WTC11 (cell line): ENCODE measurements at regions of chr14 and their contacts with region 1.

Region 1: GRCh38 chr14:74257078-74257989 is 18.1 kb downstream of the VSX2 start:
- DNase-seq: peak; percentile 68
- ATAC-seq: peak; percentile 69
- H3K4me3 Mint-ChIP-seq: peak overlapping the region; percentile 80
- H3K27ac Mint-ChIP-seq: no peak overlapping the region
- H3K4me1 Mint-ChIP-seq: no peaks in the 10 kb centered on the region
- H3K27me3 Mint-ChIP-seq: peaks cover 55% of the 10 kb centered on the region
- CTCF ChIP-seq: peak; percentile 97

Region 2: DNA sequence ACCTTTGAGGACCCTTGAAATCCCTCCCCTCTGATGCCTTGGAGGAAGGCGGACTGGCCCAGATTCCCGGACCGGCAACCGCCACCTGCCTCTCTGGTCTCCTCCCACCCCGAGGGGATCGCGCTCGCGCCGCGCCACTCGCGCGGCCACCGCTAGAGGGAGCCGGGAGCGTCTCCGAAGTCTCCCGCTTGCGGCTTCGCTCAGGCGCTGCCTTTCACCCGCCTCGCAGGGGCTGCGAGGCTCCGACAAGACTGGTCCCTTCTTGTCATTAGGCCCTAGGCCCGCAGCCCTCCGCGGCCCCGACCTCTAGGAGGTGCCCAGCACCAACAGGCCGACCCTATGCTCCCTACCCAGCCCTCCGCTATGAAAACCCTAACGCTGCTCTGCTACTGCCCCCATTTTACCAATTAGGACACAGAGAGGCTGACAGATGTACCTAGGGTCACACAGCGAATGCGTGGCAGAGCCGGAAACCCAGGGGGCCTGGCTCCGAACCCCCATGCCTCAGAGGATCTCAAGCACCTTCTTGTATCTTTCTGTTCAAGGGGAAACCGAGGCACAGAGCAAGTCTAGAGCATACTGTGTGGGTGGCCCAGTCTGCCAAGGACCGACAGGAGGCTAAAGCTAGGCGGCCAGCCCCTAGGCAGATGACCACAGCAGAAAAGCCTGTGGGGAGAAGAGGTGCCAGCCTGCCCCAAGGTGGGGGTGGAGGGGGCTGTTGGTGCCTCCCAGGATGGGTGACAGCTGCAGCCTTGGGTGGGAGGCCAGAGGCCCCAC is 39.5 kb before region 1 on chr14:
- CTCF ChIA-PET with region 1: interaction called, 35 read pairs
- POLR2A ChIA-PET with region 1: no interaction called
- DNase-seq: peak; percentile 94
- ATAC-seq: peak; percentile 92
- H3K4me3 Mint-ChIP-seq: peak overlapping the region; percentile 20; the same call in 1 of the 2 replicates
- H3K27ac Mint-ChIP-seq: no peak overlapping the region
- H3K4me1 Mint-ChIP-seq: no peaks in the 10 kb centered on the region; the same call in 1 of the 2 replicates
- H3K27me3 Mint-ChIP-seq: peaks cover 26% of the 10 kb centered on the region
- CTCF ChIP-seq: peak; percentile 94

Region 3: DNA sequence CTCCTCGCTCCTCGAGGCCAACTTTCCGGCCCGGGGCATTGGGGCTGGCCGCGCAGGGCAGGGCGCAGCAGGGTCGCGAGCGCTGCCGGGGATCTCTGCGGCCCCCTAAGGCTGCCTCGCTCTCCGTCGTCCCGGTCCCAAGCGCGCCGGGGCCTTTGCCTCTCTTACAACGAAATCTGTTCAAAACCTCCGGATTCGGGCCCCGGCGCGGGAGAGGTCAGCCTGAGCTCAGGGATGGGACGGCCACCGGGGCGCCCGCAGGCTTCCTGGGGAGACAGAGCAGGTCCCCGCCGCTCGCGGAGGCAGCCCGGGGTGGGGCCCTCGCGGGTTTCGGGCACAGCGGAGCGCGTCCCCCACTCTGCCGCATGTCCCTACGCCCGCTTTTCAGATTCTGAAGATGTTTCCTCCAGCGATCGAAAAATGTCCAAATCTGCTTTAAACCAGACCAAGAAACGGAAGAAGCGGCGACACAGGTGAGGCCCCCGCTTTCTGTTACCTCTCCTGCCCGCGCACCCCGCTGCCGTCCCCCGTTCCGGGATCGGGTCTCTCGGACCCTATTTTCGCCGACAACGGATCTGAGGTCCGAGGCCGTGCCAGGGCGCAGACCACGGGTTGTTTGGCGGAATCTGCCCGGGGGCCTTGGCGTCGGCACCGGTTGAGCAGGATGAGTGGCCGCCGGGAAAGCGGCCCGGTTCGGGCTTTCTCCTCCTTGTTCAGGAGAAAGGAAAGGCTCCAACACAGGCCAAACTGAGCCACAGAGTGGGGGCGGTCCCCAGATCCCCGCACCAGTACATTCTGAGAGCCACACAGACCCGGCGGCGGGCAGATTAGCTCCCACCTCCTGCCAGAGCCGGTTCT is 16.3 kb before region 1 on chr14:
- CTCF ChIA-PET with region 1: interaction called, 89 read pairs
- POLR2A ChIA-PET with region 1: no interaction called
- DNase-seq: peak; percentile 45
- ATAC-seq: peak; percentile 6
- H3K4me3 Mint-ChIP-seq: peak overlapping the region; percentile 66
- H3K27ac Mint-ChIP-seq: no peak overlapping the region
- H3K4me1 Mint-ChIP-seq: peaks cover 36% of the 10 kb centered on the region
- H3K27me3 Mint-ChIP-seq: peaks cover 96% of the 10 kb centered on the region
- CTCF ChIP-seq: no peak

Region 4: DNA sequence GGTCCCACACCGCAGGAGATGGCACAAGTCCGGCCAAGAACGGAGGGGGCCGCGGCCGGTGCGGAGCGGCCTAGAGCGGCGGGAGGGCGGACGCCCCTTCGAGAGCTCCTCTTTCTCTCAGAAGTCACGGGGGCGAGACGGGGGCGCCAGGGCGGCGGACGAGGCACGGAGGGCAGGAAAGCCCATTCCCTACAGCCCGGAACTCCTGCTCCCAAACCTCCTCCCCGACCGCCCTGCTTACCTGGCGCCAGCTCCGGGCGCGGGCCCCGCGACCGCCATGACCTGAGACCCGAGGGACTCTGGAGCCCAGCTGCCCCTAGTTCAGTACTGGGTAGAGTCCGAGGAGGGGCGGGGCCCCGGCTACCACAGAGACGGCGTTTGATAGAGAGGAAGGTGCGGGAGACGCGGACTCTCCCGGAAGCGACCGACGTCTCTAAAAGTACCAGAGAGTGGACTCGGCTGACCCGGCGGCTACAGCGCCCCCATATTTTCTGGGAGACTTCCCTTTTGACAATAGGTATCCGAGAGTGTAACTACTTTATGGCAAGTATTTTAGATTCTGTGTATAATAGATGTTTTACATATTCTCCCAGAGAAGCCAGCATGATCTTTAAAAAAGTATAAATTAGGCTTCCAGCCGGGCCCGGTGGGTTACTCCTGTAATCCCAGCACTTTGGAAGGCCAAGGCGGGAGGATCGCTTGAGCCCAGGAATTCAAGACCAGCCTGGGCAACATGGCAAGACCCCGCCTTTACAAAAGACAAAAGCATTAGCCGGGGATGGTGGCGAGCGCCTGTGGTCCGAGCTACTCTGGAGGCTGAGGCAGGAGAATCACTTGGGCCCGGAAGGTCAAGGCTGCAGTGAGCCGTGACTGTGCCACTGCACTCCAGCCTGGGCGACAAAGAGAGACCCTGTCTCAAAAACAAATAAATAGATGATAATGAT is 45.6 kb after region 1 on chr14 and contains the start of gene ABCD4:
- CTCF ChIA-PET with region 1: interaction called, 33 read pairs
- POLR2A ChIA-PET with region 1: no interaction called
- DNase-seq: peak; percentile 99
- ATAC-seq: peak; percentile 99
- H3K4me3 Mint-ChIP-seq: peak within 1 kb of the TSS; percentile 96
- H3K27ac Mint-ChIP-seq: peak within 1 kb of the TSS; percentile 98
- H3K4me1 Mint-ChIP-seq: peaks cover 7% of the 10 kb centered on the region
- H3K27me3 Mint-ChIP-seq: no peaks in the 10 kb centered on the region
- CTCF ChIP-seq: no peak
- total RNA-seq, gene ABCD4: 84.7 to 91.2 TPM (median 90.2 TPM) in 3 replicates

Region 5: GRCh38 chr14:74478996-74479635 is 221.8 kb after region 1 on chr14:
- CTCF ChIA-PET with region 1: interaction called, 12 read pairs
- POLR2A ChIA-PET with region 1: no interaction called
- DNase-seq: no peak
- ATAC-seq: peak; percentile 77
- H3K4me3 Mint-ChIP-seq: no peak overlapping the region
- H3K27ac Mint-ChIP-seq: no peak overlapping the region
- H3K4me1 Mint-ChIP-seq: peaks cover 5% of the 10 kb centered on the region
- H3K27me3 Mint-ChIP-seq: no peaks in the 10 kb centered on the region
- CTCF ChIP-seq: peak; percentile 78